PC-3 (cell line): ENCODE measurements at regions of chr3 and their contacts with region 1.

Region 1: GRCh38 chr3:43155464-43156121 is 49.7 kb upstream of the POMGNT2 start:
- DNase-seq: peak; percentile 90
- ATAC-seq: peak; percentile 98
- H3K4me3 ChIP-seq: no peak overlapping the region
- H3K27ac ChIP-seq: no peak overlapping the region
- H3K4me1 ChIP-seq: no peaks in the 10 kb centered on the region
- H3K27me3 ChIP-seq: no peaks in the 10 kb centered on the region
- CTCF ChIP-seq: peak; percentile 89

Region 2: GRCh38 chr3:42961633-42962032 is 194.0 kb before region 1 on chr3:
- CTCF ChIA-PET with region 1: interaction called, 8 read pairs
- POLR2A ChIA-PET with region 1: no interaction called
- intact Hi-C with region 1: loop called (anchors 1 kb)
- DNase-seq: peak; percentile 80
- ATAC-seq: peak; percentile 86
- H3K4me3 ChIP-seq: no peak overlapping the region
- H3K27ac ChIP-seq: no peak overlapping the region
- H3K4me1 ChIP-seq: no peaks in the 10 kb centered on the region
- H3K27me3 ChIP-seq: no peaks in the 10 kb centered on the region; the same call in 1 of the 2 replicates
- CTCF ChIP-seq: peak; percentile 81

Region 3: DNA sequence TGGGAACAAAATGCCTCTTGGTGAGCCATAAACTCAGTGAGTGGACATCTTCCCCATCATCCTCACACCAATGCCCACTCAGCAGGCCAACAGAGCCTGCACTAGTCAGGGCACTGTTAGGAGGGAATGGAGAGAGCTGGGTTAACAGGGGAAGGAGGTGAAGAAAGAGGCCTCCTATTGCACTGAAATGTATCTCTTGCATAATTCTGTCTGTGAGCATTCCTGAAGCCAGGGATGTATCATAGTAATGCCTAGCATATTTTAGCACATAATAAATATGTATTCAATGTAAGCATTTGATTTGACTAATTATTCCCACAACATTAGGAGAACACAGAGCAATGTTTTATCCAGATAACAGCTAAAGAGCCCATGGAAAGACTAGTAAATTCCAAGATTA is 385.0 kb after region 1 on chr3:
- CTCF ChIA-PET with region 1: no interaction called
- POLR2A ChIA-PET with region 1: no interaction called
- intact Hi-C with region 1: no loop called
- DNase-seq: no peak
- ATAC-seq: no peak
- H3K4me3 ChIP-seq: no peak overlapping the region
- H3K27ac ChIP-seq: no peak overlapping the region
- H3K4me1 ChIP-seq: no peaks in the 10 kb centered on the region
- H3K27me3 ChIP-seq: no peaks in the 10 kb centered on the region
- CTCF ChIP-seq: no peak